B cell (primary cell): ENCODE measurements at regions of chr5 and their contacts with region 1.

Region 1: DNA sequence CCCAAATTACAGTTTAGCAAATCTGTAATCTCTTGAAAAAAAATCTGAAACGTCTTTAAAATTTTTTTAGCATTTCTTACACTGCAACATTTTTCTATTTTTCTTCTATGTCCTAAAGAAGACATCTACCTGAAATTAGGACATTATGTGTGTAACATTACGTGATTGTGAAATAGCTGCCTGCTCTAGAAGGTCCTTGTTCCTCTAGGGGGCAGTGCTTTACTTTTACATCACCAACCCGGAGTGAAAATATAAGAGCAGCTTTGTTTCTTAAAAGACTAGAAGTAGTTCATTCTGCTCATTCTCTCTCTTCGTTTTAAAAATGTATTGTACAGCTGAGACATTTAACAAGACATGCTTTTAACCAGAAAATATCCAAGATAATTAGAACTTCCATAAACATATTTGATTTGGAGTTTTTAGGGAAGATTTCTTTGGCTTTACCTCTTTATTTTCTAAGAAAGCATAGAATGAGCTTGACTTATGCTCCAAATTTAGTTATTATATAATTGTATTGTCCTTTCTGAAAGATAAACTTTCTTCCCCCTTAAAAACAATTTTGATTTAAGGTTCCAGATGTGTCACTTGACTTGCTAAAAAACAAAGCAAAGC is 48.1 kb upstream of the RIOK2 start:
- DNase-seq: peak; percentile 59
- ATAC-seq: no peak
- H3K4me3 ChIP-seq: no peak overlapping the region
- H3K4me3 Mint-ChIP-seq: no peak overlapping the region
- H3K27ac ChIP-seq: no peak overlapping the region
- H3K27ac Mint-ChIP-seq: no peak overlapping the region
- H3K4me1 ChIP-seq: no peaks in the 10 kb centered on the region
- H3K4me1 Mint-ChIP-seq: peaks cover 2% of the 10 kb centered on the region
- H3K27me3 ChIP-seq: no peaks in the 10 kb centered on the region
- H3K27me3 Mint-ChIP-seq: peaks cover 4% of the 10 kb centered on the region
- CTCF ChIP-seq: peak; percentile 86

Region 2: GRCh38 chr5:97192580-97193358 is 38.4 kb before region 1 on chr5:
- CTCF ChIA-PET with region 1: no interaction called
- POLR2A ChIA-PET with region 1: no interaction called
- intact Hi-C with region 1: no loop called
- DNase-seq: no peak
- ATAC-seq: peak; percentile 56
- H3K4me3 ChIP-seq: no peak overlapping the region
- H3K4me3 Mint-ChIP-seq: no peak overlapping the region
- H3K27ac ChIP-seq: no peak overlapping the region
- H3K27ac Mint-ChIP-seq: no peak overlapping the region
- H3K4me1 ChIP-seq: peaks cover 18 to 21% of the 10 kb centered on the region in 2 donors
- H3K4me1 Mint-ChIP-seq: peaks cover 17% of the 10 kb centered on the region
- H3K27me3 ChIP-seq: no peaks in the 10 kb centered on the region
- H3K27me3 Mint-ChIP-seq: peaks cover 13% of the 10 kb centered on the region
- CTCF ChIP-seq: no peak

Region 3: GRCh38 chr5:97243353-97243752 is 12.2 kb after region 1 on chr5:
- CTCF ChIA-PET with region 1: interaction called, 10 read pairs
- POLR2A ChIA-PET with region 1: no interaction called
- intact Hi-C with region 1: no loop called
- DNase-seq: no peak
- ATAC-seq: no peak
- H3K4me3 ChIP-seq: no peak overlapping the region
- H3K4me3 Mint-ChIP-seq: no peak overlapping the region
- H3K27ac ChIP-seq: no peak overlapping the region
- H3K27ac Mint-ChIP-seq: no peak overlapping the region
- H3K4me1 ChIP-seq: no peaks in the 10 kb centered on the region
- H3K4me1 Mint-ChIP-seq: peaks cover 2% of the 10 kb centered on the region
- H3K27me3 ChIP-seq: no peaks in the 10 kb centered on the region
- H3K27me3 Mint-ChIP-seq: no peaks in the 10 kb centered on the region
- CTCF ChIP-seq: no peak

Region 4: GRCh38 chr5:97534166-97534565 is 303.0 kb after region 1 on chr5:
- CTCF ChIA-PET with region 1: interaction called, 10 read pairs
- POLR2A ChIA-PET with region 1: no interaction called
- intact Hi-C with region 1: loop called (anchors 2 kb)
- DNase-seq: peak; percentile 18
- ATAC-seq: no peak
- H3K4me3 ChIP-seq: no peak overlapping the region
- H3K4me3 Mint-ChIP-seq: no peak overlapping the region
- H3K27ac ChIP-seq: no peak overlapping the region
- H3K27ac Mint-ChIP-seq: no peak overlapping the region
- H3K4me1 ChIP-seq: no peaks in the 10 kb centered on the region
- H3K4me1 Mint-ChIP-seq: no peaks in the 10 kb centered on the region
- H3K27me3 ChIP-seq: no peaks in the 10 kb centered on the region
- H3K27me3 Mint-ChIP-seq: no peaks in the 10 kb centered on the region
- CTCF ChIP-seq: peak; percentile 35

Region 5: GRCh38 chr5:98796197-98796972 is 1565.3 kb after region 1 on chr5:
- CTCF ChIA-PET with region 1: interaction called, 48 read pairs
- POLR2A ChIA-PET with region 1: no interaction called
- intact Hi-C with region 1: loop called (anchors 1 kb)
- DNase-seq: peak; percentile 66
- ATAC-seq: peak; percentile 70
- H3K4me3 ChIP-seq: no peak overlapping the region
- H3K4me3 Mint-ChIP-seq: no peak overlapping the region
- H3K27ac ChIP-seq: no peak overlapping the region
- H3K27ac Mint-ChIP-seq: no peak overlapping the region
- H3K4me1 ChIP-seq: no peaks in the 10 kb centered on the region
- H3K4me1 Mint-ChIP-seq: peaks cover 3% of the 10 kb centered on the region
- H3K27me3 ChIP-seq: no peaks in the 10 kb centered on the region
- H3K27me3 Mint-ChIP-seq: no peaks in the 10 kb centered on the region
- CTCF ChIP-seq: peak; percentile 85